ENCODE measurements at regions of chr3 and their contacts with region 1.

Region 1: GRCh38 chr3:94004301-94004910 is 24.0 kb downstream of the STX19 start:
- DNase-seq: peak; percentile 37
- ATAC-seq: peak; percentile 63
- H3K4me3 ChIP-seq: no peak overlapping the region
- H3K27ac ChIP-seq: no peak overlapping the region
- H3K4me1 ChIP-seq: 0 out of 4 replicates have a peak, but pooled peaks cover 0 to 2% of the 10 kb centered on the region in 2 experiments
- H3K27me3 ChIP-seq: no peaks in the 10 kb centered on the region
- CTCF ChIP-seq: peak; percentile 51 to 86 (median 77); a peak in 5 of 6 replicates
- POLR2A ChIP-seq: no peak
- RAD21 ChIP-seq: peak; percentile 57

Region 2: GRCh38 chr3:94069194-94069813 is 64.9 kb after region 1 on chr3:
- CTCF ChIA-PET with region 1: interaction called, 10 read pairs
- POLR2A ChIA-PET with region 1: interaction called, 3 read pairs
- RAD21 ChIA-PET with region 1: no interaction called
- intact Hi-C with region 1: loop called (anchors 2 kb)
- DNase-seq: no peak
- ATAC-seq: no peak
- H3K4me3 ChIP-seq: no peak overlapping the region
- H3K27ac ChIP-seq: no peak overlapping the region
- H3K4me1 ChIP-seq: peaks cover 2% of the 10 kb centered on the region in 2 experiments; a peak in 2 of 4 replicates
- H3K27me3 ChIP-seq: no peaks in the 10 kb centered on the region
- CTCF ChIP-seq: peak; percentile 18 to 77 (median 24); a peak in 3 of 6 replicates
- POLR2A ChIP-seq: no peak
- RAD21 ChIP-seq: peak; percentile 48

Region 3: GRCh38 chr3:94210256-94210655 is 205.8 kb after region 1 on chr3:
- CTCF ChIA-PET with region 1: no interaction called
- POLR2A ChIA-PET with region 1: no interaction called
- RAD21 ChIA-PET with region 1: no interaction called
- intact Hi-C with region 1: no loop called
- DNase-seq: no peak
- ATAC-seq: no peak
- H3K4me3 ChIP-seq: no peak overlapping the region
- H3K27ac ChIP-seq: no peak overlapping the region
- H3K4me1 ChIP-seq: no peaks in the 10 kb centered on the region
- H3K27me3 ChIP-seq: peaks cover 4% of the 10 kb centered on the region
- CTCF ChIP-seq: no peak
- POLR2A ChIP-seq: no peak
- RAD21 ChIP-seq: no peak

Measured in HCT116 (cell line).